ENCODE measurements at regions of chr10 and their contacts with region 1.

Region 1: DNA sequence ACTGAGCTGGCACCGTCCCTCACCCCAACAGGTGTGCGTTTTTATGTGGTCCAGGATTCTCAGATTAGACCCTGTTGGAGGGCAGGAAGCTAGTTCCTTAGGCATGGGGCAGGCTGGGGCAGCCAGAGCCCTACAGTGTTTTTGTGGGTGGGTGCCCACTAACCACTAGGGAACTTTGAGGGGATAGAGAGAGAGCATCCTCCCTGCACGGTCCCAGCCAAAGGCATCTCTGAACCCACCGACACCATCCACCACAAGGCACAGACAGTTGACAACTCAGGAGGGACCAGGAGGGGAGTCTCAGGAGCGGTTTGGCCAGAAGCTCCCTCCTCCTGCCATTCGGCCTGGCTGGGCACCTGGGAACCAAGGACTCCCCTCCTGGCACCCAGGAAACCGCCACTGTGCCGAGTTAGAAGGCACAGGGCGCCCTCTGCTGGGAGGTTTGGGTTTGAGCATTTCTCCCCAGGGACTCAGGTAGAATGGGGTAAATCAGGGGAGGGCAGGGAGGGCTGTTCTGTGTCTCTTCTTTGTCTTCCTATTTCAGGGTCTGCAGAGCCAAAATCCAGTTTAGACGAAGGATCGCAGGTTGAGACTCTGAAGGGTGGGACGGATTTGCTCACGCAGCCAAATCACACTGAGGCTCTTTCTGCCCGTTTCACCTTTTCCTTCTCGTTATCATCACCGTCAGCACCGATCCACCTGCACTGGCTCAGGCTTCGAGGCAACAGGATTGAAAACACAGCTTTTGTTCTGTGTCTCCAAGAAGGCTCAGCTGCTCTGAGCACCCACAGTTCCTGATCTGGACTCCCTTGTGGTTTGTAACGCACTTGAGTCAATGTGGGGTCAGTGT is 84.8 kb upstream of the COL13A1 start:
- DNase-seq: peak; percentile 33 to 69 (median 59)
- H3K4me3 ChIP-seq: no peak overlapping the region
- H3K27ac ChIP-seq: no peak overlapping the region
- H3K4me1 ChIP-seq: no peaks in the 10 kb centered on the region
- H3K27me3 ChIP-seq: peaks cover 3% of the 10 kb centered on the region
- CTCF ChIP-seq: peak in 5 of 6 experiments; percentile 57 to 61 (median 60)
- POLR2A ChIP-seq: no peak

Region 2: DNA sequence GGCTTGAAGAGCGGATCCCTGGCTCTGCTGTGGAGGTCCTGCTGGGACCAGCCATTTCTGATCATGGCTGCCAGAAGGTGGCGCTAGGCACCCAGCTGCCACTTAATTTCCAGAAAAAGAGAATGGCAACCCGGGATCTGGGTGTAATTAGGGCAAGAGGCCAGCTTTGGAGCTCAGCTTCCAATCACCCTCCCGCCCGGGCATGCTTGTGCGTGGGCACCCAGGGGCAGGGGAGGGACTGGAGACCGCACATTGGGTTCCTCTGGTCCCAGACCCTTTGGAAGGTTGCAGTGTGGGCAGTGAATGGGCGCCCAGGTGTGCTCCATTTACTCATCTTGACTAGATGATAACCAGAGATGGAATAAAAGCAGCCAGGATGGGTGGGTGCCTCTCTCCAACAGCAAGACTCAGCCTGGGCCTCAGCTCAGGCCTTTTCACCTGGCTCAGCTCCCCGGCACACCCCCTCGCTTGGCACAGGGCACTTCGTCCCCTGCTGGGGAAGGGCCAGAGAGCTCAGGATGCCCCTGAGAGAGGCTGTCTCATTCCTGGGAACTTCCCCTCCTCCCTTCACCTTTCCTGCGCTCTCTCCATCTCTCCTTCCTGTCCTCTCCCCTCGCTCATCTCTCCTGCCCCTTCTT is 72.2 kb before region 1 on chr10:
- intact Hi-C with region 1: loop called (anchors 5 to 10 kb)
- DNase-seq: peak; percentile 36 to 69 (median 49)
- H3K4me3 ChIP-seq: no peak overlapping the region
- H3K27ac ChIP-seq: no peak overlapping the region
- H3K4me1 ChIP-seq: no peaks in the 10 kb centered on the region
- H3K27me3 ChIP-seq: no peaks in the 10 kb centered on the region
- CTCF ChIP-seq: peak; percentile 61 to 74 (median 69)
- POLR2A ChIP-seq: no peak

Region 3: GRCh38 chr10:69974551-69975155 is 257.7 kb after region 1 on chr10:
- intact Hi-C with region 1: no loop called
- DNase-seq: no peak
- H3K4me3 ChIP-seq: no peak overlapping the region
- H3K27ac ChIP-seq: no peak overlapping the region
- H3K4me1 ChIP-seq: no peaks in the 10 kb centered on the region
- H3K27me3 ChIP-seq: peaks cover 5% of the 10 kb centered on the region
- CTCF ChIP-seq: no peak
- POLR2A ChIP-seq: no peak

Measured in adrenal gland (tissue), 19 donors.